ENCODE measurements at regions of chr1 and their contacts with region 1.

Region 1: GRCh38 chr1:87045761-87046304 is 131.4 kb downstream of the HS2ST1 start:
- DNase-seq: no peak
- ATAC-seq: peak; percentile 78
- H3K4me3 ChIP-seq: no peak overlapping the region
- H3K27ac ChIP-seq: peak overlapping the region; percentile 41
- H3K4me1 ChIP-seq: peaks cover 14% of the 10 kb centered on the region
- H3K27me3 ChIP-seq: no peaks in the 10 kb centered on the region
- CTCF ChIP-seq: no peak
- EP300 ChIP-seq: no peak
- POLR2A ChIP-seq: no peak
- RAD21 ChIP-seq: no peak

Region 2: GRCh38 chr1:87030740-87031690 is 14.8 kb before region 1 on chr1:
- CTCF ChIA-PET with region 1: interaction called, 13 read pairs
- POLR2A ChIA-PET with region 1: interaction called, 3 read pairs
- RAD21 ChIA-PET with region 1: interaction called, 3 read pairs
- SMC1A ChIA-PET with region 1: interaction called, 7 read pairs
- in situ Hi-C with region 1: no loop called
- intact Hi-C with region 1: no loop called
- DNase-seq: no peak
- ATAC-seq: peak; percentile 91
- H3K4me3 ChIP-seq: no peak overlapping the region
- H3K27ac ChIP-seq: no peak overlapping the region
- H3K4me1 ChIP-seq: no peaks in the 10 kb centered on the region
- H3K27me3 ChIP-seq: no peaks in the 10 kb centered on the region
- CTCF ChIP-seq: no peak
- EP300 ChIP-seq: no peak
- POLR2A ChIP-seq: no peak
- RAD21 ChIP-seq: no peak

Region 3: GRCh38 chr1:87061742-87062156 is 15.9 kb after region 1 on chr1:
- CTCF ChIA-PET with region 1: interaction called, 5 read pairs
- POLR2A ChIA-PET with region 1: interaction called, 30 read pairs
- RAD21 ChIA-PET with region 1: interaction called, 34 read pairs
- SMC1A ChIA-PET with region 1: interaction called, 65 read pairs
- in situ Hi-C with region 1: no loop called
- intact Hi-C with region 1: no loop called
- DNase-seq: peak; percentile 66
- ATAC-seq: peak; percentile 58
- H3K4me3 ChIP-seq: no peak overlapping the region
- H3K27ac ChIP-seq: peak overlapping the region; percentile 5
- H3K4me1 ChIP-seq: peaks cover 30% of the 10 kb centered on the region
- H3K27me3 ChIP-seq: no peaks in the 10 kb centered on the region
- CTCF ChIP-seq: no peak
- EP300 ChIP-seq: 0 out of 4 replicates have a peak, but pooled peaks of 1 of the 2 experiments have one; percentile 40
- POLR2A ChIP-seq: no peak
- RAD21 ChIP-seq: no peak

Region 4: DNA sequence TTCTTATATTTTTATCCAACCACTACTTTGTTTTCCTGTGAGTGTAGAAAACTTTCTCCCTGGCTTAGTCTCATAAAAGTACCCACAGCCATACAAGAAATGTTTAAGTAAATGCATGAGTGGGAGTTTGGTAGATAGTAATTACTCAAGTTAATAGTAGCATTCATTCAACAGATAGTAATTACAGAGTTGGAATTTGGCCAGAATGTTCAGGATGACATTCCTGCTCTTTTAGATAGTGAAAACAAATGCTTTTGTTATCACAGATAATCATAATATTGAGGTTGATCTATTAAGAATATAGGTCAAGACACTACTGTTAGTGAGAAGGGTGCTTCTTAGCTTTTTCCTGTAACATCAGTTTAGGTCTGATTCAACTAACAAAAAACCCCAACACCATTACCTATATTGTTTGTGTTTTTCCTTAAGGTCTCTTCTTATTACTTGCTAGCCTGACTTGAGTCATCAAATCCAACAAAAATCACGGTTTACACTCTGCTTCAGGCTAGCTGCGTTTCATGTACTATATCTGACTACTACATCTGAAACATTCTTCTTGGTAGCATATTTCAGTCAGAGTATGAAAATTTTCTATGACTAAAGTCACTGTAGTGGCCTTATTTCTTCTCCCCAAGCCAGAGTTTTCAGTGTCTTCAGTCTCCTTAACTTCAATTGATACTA is 32.3 kb after region 1 on chr1:
- CTCF ChIA-PET with region 1: interaction called, 26 read pairs
- POLR2A ChIA-PET with region 1: no interaction called
- RAD21 ChIA-PET with region 1: interaction called, 32 read pairs
- SMC1A ChIA-PET with region 1: interaction called, 38 read pairs
- in situ Hi-C with region 1: no loop called
- intact Hi-C with region 1: no loop called
- DNase-seq: no peak
- ATAC-seq: peak; percentile 47
- H3K4me3 ChIP-seq: no peak overlapping the region
- H3K27ac ChIP-seq: peak overlapping the region; percentile 46; the same call in 1 of the 2 replicates
- H3K4me1 ChIP-seq: peaks cover 13% of the 10 kb centered on the region
- H3K27me3 ChIP-seq: no peaks in the 10 kb centered on the region
- CTCF ChIP-seq: no peak
- EP300 ChIP-seq: no peak
- POLR2A ChIP-seq: no peak
- RAD21 ChIP-seq: no peak

Region 5: GRCh38 chr1:87202922-87203655 is 157.3 kb after region 1 on chr1:
- CTCF ChIA-PET with region 1: interaction called, 3 read pairs
- POLR2A ChIA-PET with region 1: interaction called, 10 read pairs
- RAD21 ChIA-PET with region 1: no interaction called
- SMC1A ChIA-PET with region 1: no interaction called
- in situ Hi-C with region 1: no loop called
- intact Hi-C with region 1: no loop called
- DNase-seq: peak; percentile 69
- ATAC-seq: peak; percentile 96
- H3K4me3 ChIP-seq: no peak overlapping the region; the same call in 1 of the 2 replicates
- H3K27ac ChIP-seq: no peak overlapping the region
- H3K4me1 ChIP-seq: peaks cover 12% of the 10 kb centered on the region
- H3K27me3 ChIP-seq: no peaks in the 10 kb centered on the region; a peak in 2 of 4 replicates
- CTCF ChIP-seq: no peak
- EP300 ChIP-seq: peak; percentile 35 to 74; a peak in 1 of 4 replicates
- POLR2A ChIP-seq: no peak
- RAD21 ChIP-seq: no peak

Measured in GM12878 (cell line).